OCI-LY7 (cell line): ENCODE measurements at regions of chr15 and their contacts with region 1.

Region 1: DNA sequence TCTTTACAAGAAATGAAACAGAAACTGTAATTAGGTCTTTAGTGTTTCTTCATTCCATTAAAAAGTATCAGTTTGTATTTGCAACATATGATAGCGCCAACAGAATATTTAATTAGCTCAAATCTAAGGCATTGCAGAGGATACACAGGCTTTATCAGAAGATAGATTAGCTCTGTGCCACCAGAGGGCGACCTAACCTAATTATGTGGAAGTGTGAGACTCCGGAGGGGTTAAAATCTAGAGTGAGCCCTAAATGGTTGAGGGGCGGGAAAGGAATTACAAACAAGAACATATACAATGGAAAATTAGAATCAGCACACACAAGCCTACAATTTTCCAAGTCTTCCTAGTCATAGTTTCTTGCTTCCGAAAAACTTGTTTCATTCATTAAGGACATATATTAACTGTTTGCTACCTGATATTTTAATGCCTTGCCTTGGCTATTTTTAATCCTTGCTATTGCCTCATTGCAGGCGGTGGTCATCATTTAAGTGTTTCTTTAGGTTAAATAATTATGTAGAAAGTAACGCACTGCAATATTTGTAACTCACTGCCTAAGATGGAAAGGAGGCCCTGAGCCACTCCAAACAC is 18.0 kb upstream of the RYR3 start:
- DNase-seq: peak; percentile 78
- H3K4me3 ChIP-seq: no peak overlapping the region
- H3K27ac ChIP-seq: no peak overlapping the region
- H3K4me1 ChIP-seq: no peaks in the 10 kb centered on the region
- CTCF ChIP-seq: peak; percentile 96

Region 2: DNA sequence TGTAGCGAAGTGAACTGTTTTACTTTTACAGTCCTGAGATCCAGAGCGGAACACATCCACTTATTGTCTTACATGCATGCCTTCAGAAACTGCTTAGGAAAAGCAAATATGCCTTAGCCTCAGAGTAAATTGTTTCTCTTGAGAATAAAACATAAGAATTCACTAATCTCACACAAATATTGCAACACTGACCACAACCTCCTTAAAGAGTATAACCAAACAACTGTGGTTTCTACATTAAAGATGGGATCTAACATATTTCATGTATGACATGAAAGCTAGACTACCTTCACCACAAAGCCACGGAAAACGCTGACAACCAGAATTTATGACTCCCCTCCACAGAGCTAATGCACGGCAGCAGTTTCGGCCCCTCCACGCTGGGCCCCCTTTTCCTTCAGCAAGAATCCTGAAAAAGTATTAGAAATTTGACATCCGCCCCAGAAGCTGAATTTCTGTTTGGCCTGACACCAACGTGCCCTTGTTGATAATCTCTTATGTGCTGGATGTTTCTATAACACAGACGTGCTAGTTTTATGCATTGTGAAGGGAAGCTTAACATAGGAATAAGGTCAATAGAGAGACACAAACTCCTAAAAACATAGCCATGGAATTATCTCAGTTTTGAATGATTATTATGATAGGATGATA is 490.4 kb before region 1 on chr15:
- CTCF ChIA-PET with region 1: no interaction called
- POLR2A ChIA-PET with region 1: no interaction called
- intact Hi-C with region 1: no loop called
- DNase-seq: no peak
- H3K4me3 ChIP-seq: no peak overlapping the region
- H3K27ac ChIP-seq: no peak overlapping the region
- H3K4me1 ChIP-seq: no peaks in the 10 kb centered on the region
- CTCF ChIP-seq: no peak

Region 3: DNA sequence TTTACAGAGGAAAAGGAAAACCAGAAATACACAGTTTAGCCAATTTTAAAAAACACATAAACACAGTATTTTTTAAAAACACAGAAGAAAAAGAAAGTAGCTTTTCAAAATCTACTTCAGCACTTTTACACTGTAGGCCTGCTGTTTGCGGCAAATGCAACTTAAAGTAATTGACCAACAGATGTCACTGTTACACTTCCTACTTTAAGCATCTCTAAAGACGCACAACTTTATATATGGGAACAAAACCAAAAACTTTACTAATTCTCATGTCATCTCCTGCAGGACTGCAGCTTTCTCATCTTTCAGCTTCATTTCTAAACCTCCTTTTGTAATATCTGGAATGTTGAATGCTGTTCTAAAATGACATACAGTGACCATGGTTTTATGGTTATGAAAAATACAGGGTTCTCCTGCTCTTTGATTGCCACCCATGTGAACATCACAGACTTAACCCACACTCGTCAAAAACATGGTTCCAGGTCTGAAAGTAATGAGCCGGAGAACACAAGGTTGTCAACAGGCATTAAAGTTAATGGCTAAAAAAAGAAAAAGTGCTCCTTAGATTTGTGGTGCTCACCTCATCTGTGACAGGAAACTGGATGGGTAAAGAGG is 206.2 kb before region 1 on chr15:
- CTCF ChIA-PET with region 1: no interaction called
- POLR2A ChIA-PET with region 1: no interaction called
- intact Hi-C with region 1: loop called (anchors 5 kb)
- DNase-seq: peak; percentile 57
- H3K4me3 ChIP-seq: no peak overlapping the region
- H3K27ac ChIP-seq: no peak overlapping the region
- H3K4me1 ChIP-seq: no peaks in the 10 kb centered on the region
- CTCF ChIP-seq: peak; percentile 87

Region 4: DNA sequence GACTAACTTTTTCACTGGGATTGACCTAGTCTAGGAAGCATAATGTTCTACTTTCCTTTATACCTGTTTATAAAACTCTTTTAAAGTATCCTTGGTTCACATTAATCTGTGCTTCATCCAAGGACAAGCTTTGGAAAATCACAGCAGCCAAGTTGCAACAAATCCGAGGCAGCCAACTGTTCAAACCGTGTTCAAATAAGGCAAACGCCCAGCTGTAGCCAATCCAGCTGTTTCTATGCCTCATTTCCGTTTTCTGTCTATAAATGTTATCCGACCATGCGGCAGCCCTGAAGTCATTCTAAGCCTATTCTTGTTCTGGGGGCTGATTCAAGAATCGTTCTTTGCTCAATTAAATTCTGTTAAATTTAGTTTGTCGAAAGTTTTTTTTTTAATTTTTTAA is 176.6 kb before region 1 on chr15:
- CTCF ChIA-PET with region 1: no interaction called
- POLR2A ChIA-PET with region 1: no interaction called
- intact Hi-C with region 1: no loop called
- DNase-seq: no peak
- H3K4me3 ChIP-seq: no peak overlapping the region
- H3K27ac ChIP-seq: no peak overlapping the region
- H3K4me1 ChIP-seq: no peaks in the 10 kb centered on the region
- CTCF ChIP-seq: no peak

Region 5: DNA sequence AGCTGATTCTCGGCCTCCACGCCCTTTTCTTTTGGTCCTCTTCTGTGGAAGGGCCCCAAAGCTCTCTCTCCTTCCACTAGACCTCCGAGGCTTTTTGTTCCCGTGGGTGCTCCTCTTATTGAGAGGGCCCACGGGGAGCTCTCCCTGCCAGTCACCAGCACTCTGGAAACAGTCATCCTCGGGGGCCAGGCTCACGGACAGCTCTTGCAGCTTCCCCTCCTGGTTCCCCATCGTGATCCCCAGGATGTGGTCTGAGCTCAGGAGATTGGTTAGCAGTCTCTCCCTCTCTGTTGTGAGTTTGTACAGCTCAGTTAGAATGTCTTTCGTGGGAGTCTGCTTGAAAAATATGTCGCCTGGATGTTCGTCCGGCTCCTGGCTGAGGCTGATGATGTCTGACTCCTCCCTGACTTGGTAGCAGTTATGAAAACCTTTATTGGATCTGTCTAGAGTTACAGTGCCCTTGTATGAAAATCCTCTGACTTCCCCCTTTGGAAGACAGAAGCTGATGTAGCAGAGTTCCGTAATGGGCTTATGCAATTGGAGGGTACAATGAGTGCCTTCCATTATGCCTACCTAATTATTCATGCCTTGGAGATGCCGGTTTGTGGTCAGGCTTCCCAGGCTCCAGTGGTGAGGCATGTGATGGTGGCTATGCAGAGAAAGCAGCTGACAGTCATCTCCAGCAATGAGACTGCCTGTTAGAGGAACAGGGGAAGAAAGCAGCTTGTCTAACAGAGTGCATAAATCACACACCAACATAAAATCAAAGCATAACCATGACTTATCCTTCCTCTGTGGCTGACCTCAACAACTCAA is 138.3 kb before region 1 on chr15:
- CTCF ChIA-PET with region 1: no interaction called
- POLR2A ChIA-PET with region 1: no interaction called
- intact Hi-C with region 1: no loop called
- DNase-seq: no peak
- H3K4me3 ChIP-seq: no peak overlapping the region
- H3K27ac ChIP-seq: no peak overlapping the region
- H3K4me1 ChIP-seq: no peaks in the 10 kb centered on the region
- CTCF ChIP-seq: no peak

Region 6: DNA sequence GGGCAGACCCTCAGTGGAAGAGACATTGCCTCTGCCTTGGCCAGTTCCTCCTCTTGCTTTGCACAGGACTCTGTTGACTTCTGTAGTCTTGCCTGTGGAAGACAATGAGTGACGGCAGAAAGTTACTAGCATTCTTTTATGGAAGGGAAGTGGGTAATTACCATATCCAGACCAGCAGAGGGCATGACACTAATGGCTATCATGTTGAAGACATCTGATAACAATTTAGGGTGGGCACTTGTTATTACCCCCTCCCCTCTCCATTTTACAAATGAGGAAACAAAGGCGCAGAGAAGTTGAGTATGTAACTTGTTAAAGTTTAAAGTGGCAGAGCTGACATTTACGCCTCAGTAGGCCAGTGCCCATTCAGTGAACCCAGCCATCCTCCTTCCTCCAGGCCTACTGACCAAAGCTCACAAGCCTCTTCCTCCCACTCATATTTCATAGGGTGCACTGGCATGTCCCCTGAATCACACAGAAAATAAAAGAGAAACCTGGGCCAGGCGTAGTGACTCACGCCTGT is 50.1 kb before region 1 on chr15:
- CTCF ChIA-PET with region 1: no interaction called
- POLR2A ChIA-PET with region 1: no interaction called
- intact Hi-C with region 1: loop called (anchors 5 kb)
- DNase-seq: peak; percentile 44
- H3K4me3 ChIP-seq: no peak overlapping the region
- H3K27ac ChIP-seq: no peak overlapping the region
- H3K4me1 ChIP-seq: peaks cover 9% of the 10 kb centered on the region
- CTCF ChIP-seq: peak; percentile 83

Region 7: DNA sequence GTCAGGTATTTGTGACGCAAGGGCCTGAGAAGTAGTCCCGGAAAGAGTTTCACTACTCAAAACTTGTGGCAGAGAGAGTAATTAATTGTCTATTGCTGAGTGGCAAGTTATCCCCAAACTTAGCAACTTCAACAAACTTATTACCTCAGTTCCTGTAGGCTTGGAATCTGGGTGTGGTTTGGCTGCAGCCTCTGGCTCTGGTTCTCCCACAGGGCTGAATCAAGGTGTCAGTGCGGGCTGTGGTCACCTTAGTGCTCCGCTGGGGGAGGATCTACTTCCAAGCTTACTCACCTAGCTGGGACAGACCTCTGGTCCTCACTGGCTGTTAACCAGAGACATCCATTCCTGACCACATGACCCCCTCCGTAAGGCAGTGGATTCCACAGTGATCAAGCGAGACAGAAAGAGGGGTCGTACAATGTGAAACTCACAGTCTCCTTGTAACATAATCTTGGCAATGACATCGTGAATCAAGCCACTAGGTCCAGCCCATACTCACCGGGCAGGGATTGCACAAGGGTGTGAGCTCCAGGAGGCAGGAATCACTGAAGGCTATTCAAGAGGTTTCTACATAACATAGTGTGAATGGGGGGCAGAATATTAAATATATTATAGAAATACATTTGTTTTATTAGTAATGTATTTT is 156.3 kb after region 1 on chr15:
- CTCF ChIA-PET with region 1: no interaction called
- POLR2A ChIA-PET with region 1: no interaction called
- intact Hi-C with region 1: loop called (anchors 5 kb)
- DNase-seq: no peak
- H3K4me3 ChIP-seq: no peak overlapping the region
- H3K27ac ChIP-seq: no peak overlapping the region
- H3K4me1 ChIP-seq: no peaks in the 10 kb centered on the region
- CTCF ChIP-seq: no peak

Region 8: DNA sequence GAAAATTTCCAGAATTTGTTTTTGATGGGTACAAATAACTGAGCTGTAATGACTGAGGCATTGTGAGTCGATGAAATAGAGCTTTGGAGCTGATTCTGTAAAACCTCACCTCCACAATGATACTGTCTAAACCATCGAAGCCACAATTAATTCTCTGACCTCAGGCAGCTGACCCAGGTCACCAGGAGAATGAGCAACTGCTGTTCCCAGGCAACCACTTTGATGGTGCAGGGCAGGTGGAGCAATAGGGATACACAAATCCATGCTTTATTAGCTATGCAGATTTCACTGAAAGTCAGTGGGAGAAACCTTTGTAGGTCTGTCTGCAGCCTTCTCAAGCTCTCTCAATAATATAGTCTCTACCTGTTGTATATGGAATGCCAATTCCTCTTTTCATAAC is 222.3 kb after region 1 on chr15:
- CTCF ChIA-PET with region 1: no interaction called
- POLR2A ChIA-PET with region 1: no interaction called
- intact Hi-C with region 1: loop called (anchors 10 kb)
- DNase-seq: no peak
- H3K4me3 ChIP-seq: no peak overlapping the region
- H3K27ac ChIP-seq: no peak overlapping the region
- H3K4me1 ChIP-seq: no peaks in the 10 kb centered on the region
- CTCF ChIP-seq: no peak

Region 9: GRCh38 chr15:33608714-33609113 is 315.9 kb after region 1 on chr15:
- CTCF ChIA-PET with region 1: no interaction called
- POLR2A ChIA-PET with region 1: no interaction called
- intact Hi-C with region 1: no loop called
- DNase-seq: no peak
- H3K4me3 ChIP-seq: no peak overlapping the region
- H3K27ac ChIP-seq: no peak overlapping the region
- H3K4me1 ChIP-seq: no peaks in the 10 kb centered on the region
- CTCF ChIP-seq: 0 out of 2 replicates have a peak, but pooled peaks have one; percentile 31

Region 10: GRCh38 chr15:33675246-33675645 is 382.4 kb after region 1 on chr15:
- CTCF ChIA-PET with region 1: interaction called, 4 read pairs
- POLR2A ChIA-PET with region 1: interaction called, 4 read pairs
- intact Hi-C with region 1: loop called (anchors 1 kb)
- DNase-seq: peak; percentile 65
- H3K4me3 ChIP-seq: no peak overlapping the region
- H3K27ac ChIP-seq: no peak overlapping the region
- H3K4me1 ChIP-seq: peaks cover 47% of the 10 kb centered on the region
- CTCF ChIP-seq: peak; percentile 90

Region 11: DNA sequence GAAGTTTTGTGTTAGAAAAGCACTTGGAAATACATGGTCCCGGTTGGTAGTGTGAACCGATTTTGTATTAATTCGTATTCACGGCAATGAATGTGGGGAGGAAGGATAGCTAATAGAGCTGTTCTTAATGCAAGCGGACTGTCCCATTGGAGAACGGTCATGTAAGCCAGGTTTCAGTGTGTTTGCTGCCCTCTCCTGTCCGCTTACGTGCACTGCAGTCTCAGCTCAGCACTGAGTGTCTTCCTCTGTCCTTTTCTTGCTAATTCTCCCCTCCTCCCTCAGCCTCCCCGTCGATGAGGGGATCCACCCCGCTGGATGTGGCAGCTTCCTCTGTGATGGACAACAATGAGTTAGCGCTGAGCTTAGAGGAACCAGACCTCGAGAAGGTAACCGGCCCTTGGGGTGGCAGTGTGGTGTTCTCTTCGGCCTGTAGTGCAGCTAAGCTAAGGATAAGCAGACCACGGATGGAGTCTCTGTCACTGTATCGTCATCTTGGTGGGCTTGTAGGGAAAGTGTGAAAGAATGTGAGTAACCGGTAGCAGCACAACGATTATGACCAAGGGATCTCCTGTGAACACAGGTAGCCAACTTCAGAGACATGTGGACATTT is 408.0 kb after region 1 on chr15:
- CTCF ChIA-PET with region 1: interaction called, 12 read pairs
- POLR2A ChIA-PET with region 1: no interaction called
- intact Hi-C with region 1: loop called (anchors 1 kb)
- DNase-seq: peak; percentile 65
- H3K4me3 ChIP-seq: no peak overlapping the region
- H3K27ac ChIP-seq: no peak overlapping the region
- H3K4me1 ChIP-seq: no peaks in the 10 kb centered on the region
- CTCF ChIP-seq: peak; percentile 95